Mammary epithelial cell (primary cell): ENCODE measurements at regions of chrX and their contacts with region 1.

Region 1: GRCh38 chrX:48761674-48762471 is at the start of gene GLOD5:
- DNase-seq: peak; percentile 57
- H3K4me3 ChIP-seq: no peak within 1 kb of the TSS
- H3K27ac ChIP-seq: no peak within 1 kb of the TSS
- H3K4me1 ChIP-seq: no peaks in the 10 kb centered on the region
- H3K27me3 ChIP-seq: no peaks in the 10 kb centered on the region
- CTCF ChIP-seq: peak; percentile 27 to 57
- total RNA-seq, gene GLOD5: not detected

Region 2: GRCh38 chrX:48703642-48704481 is 58.0 kb before region 1 on chrX:
- CTCF ChIA-PET with region 1: no interaction called
- dilution Hi-C with region 1: no loop called
- in situ Hi-C with region 1: no loop called
- intact Hi-C with region 1: no loop called
- DNase-seq: peak; percentile 94
- H3K4me3 ChIP-seq: no peak overlapping the region
- H3K27ac ChIP-seq: peak overlapping the region; percentile 27
- H3K4me1 ChIP-seq: peaks cover 22% of the 10 kb centered on the region
- H3K27me3 ChIP-seq: no peaks in the 10 kb centered on the region
- CTCF ChIP-seq: peak in 1 of 2 donors; percentile 18

Region 3: DNA sequence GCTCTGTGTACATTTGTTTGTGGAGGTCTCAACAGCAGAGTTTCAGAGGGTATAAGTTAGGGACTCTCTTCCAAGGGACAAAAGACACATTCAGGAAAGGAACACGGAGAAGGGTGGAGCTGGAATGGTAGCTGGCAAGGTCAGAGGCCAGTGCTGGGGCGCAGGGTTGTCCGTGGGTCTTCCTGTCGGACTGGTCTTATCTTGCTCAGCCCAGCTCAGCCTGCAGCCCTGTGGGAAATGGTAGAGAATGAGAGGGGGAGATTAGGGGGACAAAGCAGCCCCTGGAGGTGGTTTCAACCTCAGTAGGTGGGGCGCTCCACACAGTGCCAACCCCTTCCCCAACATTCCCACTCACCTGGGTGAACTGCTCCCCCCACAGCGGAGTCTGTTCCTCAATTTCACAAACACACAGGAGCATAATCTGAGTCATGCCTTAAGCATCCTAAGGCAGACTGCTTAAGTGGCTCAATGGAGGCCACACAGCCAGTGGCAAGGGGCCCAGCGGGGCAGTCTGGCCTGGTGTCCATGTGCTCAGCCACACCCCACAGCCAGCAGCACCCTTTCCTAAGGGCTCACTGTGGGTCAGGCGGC is 33.1 kb after region 1 on chrX:
- CTCF ChIA-PET with region 1: no interaction called
- dilution Hi-C with region 1: loop called (anchors 5 kb)
- in situ Hi-C with region 1: no loop called
- intact Hi-C with region 1: no loop called
- DNase-seq: peak; percentile 21
- H3K4me3 ChIP-seq: no peak overlapping the region
- H3K27ac ChIP-seq: no peak overlapping the region
- H3K4me1 ChIP-seq: peaks cover 7% of the 10 kb centered on the region
- H3K27me3 ChIP-seq: no peaks in the 10 kb centered on the region
- CTCF ChIP-seq: no peak

Region 4: GRCh38 chrX:48897621-48898306 is 135.9 kb after region 1 on chrX and contains the starts of genes PQBP1 and TIMM17B:
- CTCF ChIA-PET with region 1: no interaction called
- dilution Hi-C with region 1: no loop called
- in situ Hi-C with region 1: no loop called
- intact Hi-C with region 1: loop called (anchors 5 kb)
- DNase-seq: peak; percentile 94
- H3K4me3 ChIP-seq: peak within 1 kb of the TSS; percentile 26 to 77 (median 59)
- H3K27ac ChIP-seq: peak within 1 kb of the TSS; percentile 78
- H3K4me1 ChIP-seq: no peaks in the 10 kb centered on the region
- H3K27me3 ChIP-seq: no peaks in the 10 kb centered on the region
- CTCF ChIP-seq: no peak
- total RNA-seq, gene PQBP1: 31.2 to 69.5 TPM
- total RNA-seq, gene TIMM17B: 28.0 to 53.2 TPM

Region 5: DNA sequence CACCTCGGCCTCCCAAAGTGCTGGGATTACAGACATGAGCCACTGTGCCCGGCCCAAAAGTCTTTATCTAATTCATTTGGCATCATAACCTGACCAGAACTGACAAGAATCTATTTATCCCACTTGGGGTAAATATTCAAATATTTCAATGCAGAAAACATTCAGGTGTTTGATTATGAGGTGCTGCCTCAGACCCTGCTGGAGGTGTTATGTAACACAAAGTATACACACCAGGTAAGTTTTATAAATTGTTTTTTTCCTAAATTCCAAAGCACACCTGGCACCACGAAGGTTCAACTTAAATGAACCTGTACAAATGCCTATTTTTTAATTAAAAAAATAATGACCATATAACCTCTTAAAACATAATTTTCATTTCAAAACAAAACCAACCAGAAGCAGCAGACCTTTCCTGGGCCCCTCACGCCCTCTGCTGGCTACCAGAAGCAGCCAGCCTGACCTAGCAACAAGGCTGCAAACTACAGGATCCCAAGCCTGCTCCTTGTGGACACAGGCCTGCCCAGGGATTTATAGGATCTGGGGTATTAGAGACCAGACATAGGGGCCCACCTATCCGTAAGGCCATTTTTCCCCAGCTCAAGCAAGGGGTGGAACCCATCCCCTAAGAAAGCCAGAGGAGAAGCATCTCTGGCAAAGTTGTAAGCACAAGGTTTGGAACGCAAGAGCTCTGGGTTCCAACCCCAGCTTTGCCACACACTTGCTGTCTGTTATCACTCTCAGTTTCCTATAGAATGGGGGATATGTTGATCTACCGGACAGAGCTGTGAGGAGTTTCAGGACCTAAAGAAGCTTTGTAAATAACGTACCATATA is 183.9 kb after region 1 on chrX:
- CTCF ChIA-PET with region 1: no interaction called
- dilution Hi-C with region 1: no loop called
- in situ Hi-C with region 1: no loop called
- intact Hi-C with region 1: loop called (anchors 5 kb)
- DNase-seq: peak; percentile 27
- H3K4me3 ChIP-seq: no peak overlapping the region
- H3K27ac ChIP-seq: no peak overlapping the region
- H3K4me1 ChIP-seq: no peaks in the 10 kb centered on the region
- H3K27me3 ChIP-seq: no peaks in the 10 kb centered on the region
- CTCF ChIP-seq: peak; percentile 69 to 76

Region 6: GRCh38 chrX:49155900-49156837 is 394.3 kb after region 1 on chrX:
- CTCF ChIA-PET with region 1: no interaction called
- dilution Hi-C with region 1: no loop called
- in situ Hi-C with region 1: no loop called
- intact Hi-C with region 1: loop called (anchors 5 kb)
- DNase-seq: peak; percentile 78
- H3K4me3 ChIP-seq: peak overlapping the region in 2 of 3 experiments; percentile 29 to 55
- H3K27ac ChIP-seq: peak overlapping the region; percentile 67
- H3K4me1 ChIP-seq: peaks cover 3% of the 10 kb centered on the region
- H3K27me3 ChIP-seq: no peaks in the 10 kb centered on the region
- CTCF ChIP-seq: peak; percentile 39 to 69